ENCODE measurements at regions of chr18 and their contacts with region 1.

Region 1: DNA sequence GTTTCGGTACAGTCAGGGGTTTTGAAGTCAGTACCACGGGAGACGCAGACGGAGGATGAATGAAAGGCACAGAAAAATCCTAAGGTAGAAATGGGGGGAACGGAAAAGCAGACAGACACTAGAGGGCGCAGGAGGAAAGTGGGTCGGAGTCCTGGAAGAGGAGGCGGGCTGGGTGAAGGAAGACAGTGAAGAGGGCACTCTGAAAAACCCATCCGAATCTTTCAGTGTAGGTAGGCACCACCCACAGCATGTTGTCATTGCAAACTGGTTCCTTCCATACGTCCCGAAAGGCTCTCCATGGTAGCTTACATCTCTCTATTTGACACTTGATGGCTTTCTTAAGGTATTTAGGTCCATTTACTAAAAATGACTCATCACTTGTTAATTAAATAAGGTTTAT is 18.5 kb upstream of the ZNF236 start:
- DNase-seq: peak; percentile 59 to 71
- H3K4me3 ChIP-seq: no peak overlapping the region
- H3K4me3 Mint-ChIP-seq: no peak overlapping the region
- H3K27ac Mint-ChIP-seq: no peak overlapping the region
- H3K4me1 ChIP-seq: no peaks in the 10 kb centered on the region
- H3K4me1 Mint-ChIP-seq: peaks cover 5% of the 10 kb centered on the region
- H3K27me3 ChIP-seq: no peaks in the 10 kb centered on the region
- H3K27me3 Mint-ChIP-seq: no peaks in the 10 kb centered on the region
- CTCF ChIP-seq: peak; percentile 33 to 75

Region 2: GRCh38 chr18:76791642-76792041 is 12.2 kb before region 1 on chr18:
- CTCF ChIA-PET with region 1: interaction called, 10 read pairs
- POLR2A ChIA-PET with region 1: no interaction called
- intact Hi-C with region 1: no loop called
- DNase-seq: no peak
- H3K4me3 ChIP-seq: no peak overlapping the region
- H3K4me3 Mint-ChIP-seq: no peak overlapping the region
- H3K27ac Mint-ChIP-seq: no peak overlapping the region
- H3K4me1 ChIP-seq: no peaks in the 10 kb centered on the region
- H3K4me1 Mint-ChIP-seq: no peaks in the 10 kb centered on the region
- H3K27me3 ChIP-seq: no peaks in the 10 kb centered on the region
- H3K27me3 Mint-ChIP-seq: no peaks in the 10 kb centered on the region
- CTCF ChIP-seq: no peak

Region 3: DNA sequence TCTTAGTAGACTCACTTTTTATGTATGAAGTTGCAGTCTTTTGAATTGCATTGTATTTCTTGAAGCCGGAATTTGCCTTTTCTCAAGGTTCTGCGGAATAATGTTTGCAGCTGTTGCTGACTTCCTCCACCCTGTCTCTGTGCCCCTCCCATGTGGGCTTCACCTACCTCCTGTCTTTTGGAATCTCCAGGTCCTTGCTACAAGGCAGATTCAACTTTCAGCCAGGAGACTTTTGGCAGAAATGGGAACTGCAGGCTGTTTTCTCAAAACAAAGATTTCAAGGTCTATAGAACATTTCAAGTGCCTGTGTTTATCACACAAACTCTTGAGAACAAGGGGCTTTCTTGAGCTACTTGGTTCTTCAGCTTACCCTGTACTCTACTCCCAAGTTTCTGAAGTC is 44.1 kb after region 1 on chr18:
- CTCF ChIA-PET with region 1: no interaction called
- POLR2A ChIA-PET with region 1: no interaction called
- intact Hi-C with region 1: loop called (anchors 2 kb)
- DNase-seq: peak in 1 of 2 experiments; percentile 12
- H3K4me3 ChIP-seq: no peak overlapping the region
- H3K4me3 Mint-ChIP-seq: no peak overlapping the region
- H3K27ac Mint-ChIP-seq: no peak overlapping the region
- H3K4me1 ChIP-seq: no peaks in the 10 kb centered on the region
- H3K4me1 Mint-ChIP-seq: peaks cover 14% of the 10 kb centered on the region
- H3K27me3 ChIP-seq: no peaks in the 10 kb centered on the region
- H3K27me3 Mint-ChIP-seq: no peaks in the 10 kb centered on the region
- CTCF ChIP-seq: peak in 1 of 2 experiments; percentile 13

Region 4: GRCh38 chr18:76875390-76876325 is 71.8 kb after region 1 on chr18:
- CTCF ChIA-PET with region 1: no interaction called
- POLR2A ChIA-PET with region 1: no interaction called
- intact Hi-C with region 1: loop called (anchors 2 kb)
- DNase-seq: peak in 1 of 2 experiments; percentile 44
- H3K4me3 ChIP-seq: no peak overlapping the region
- H3K4me3 Mint-ChIP-seq: no peak overlapping the region
- H3K27ac Mint-ChIP-seq: no peak overlapping the region
- H3K4me1 ChIP-seq: no peaks in the 10 kb centered on the region
- H3K4me1 Mint-ChIP-seq: no peaks in the 10 kb centered on the region
- H3K27me3 ChIP-seq: no peaks in the 10 kb centered on the region
- H3K27me3 Mint-ChIP-seq: no peaks in the 10 kb centered on the region
- CTCF ChIP-seq: peak; percentile 30 to 38

Region 5: GRCh38 chr18:76922107-76922506 is 118.3 kb after region 1 on chr18:
- CTCF ChIA-PET with region 1: interaction called, 3 read pairs
- POLR2A ChIA-PET with region 1: no interaction called
- intact Hi-C with region 1: loop called (anchors 2 kb)
- DNase-seq: peak in 1 of 2 experiments; percentile 23
- H3K4me3 ChIP-seq: no peak overlapping the region
- H3K4me3 Mint-ChIP-seq: no peak overlapping the region
- H3K27ac Mint-ChIP-seq: no peak overlapping the region
- H3K4me1 ChIP-seq: no peaks in the 10 kb centered on the region
- H3K4me1 Mint-ChIP-seq: no peaks in the 10 kb centered on the region
- H3K27me3 ChIP-seq: no peaks in the 10 kb centered on the region
- H3K27me3 Mint-ChIP-seq: no peaks in the 10 kb centered on the region
- CTCF ChIP-seq: peak in 1 of 2 experiments; percentile 40

Region 6: DNA sequence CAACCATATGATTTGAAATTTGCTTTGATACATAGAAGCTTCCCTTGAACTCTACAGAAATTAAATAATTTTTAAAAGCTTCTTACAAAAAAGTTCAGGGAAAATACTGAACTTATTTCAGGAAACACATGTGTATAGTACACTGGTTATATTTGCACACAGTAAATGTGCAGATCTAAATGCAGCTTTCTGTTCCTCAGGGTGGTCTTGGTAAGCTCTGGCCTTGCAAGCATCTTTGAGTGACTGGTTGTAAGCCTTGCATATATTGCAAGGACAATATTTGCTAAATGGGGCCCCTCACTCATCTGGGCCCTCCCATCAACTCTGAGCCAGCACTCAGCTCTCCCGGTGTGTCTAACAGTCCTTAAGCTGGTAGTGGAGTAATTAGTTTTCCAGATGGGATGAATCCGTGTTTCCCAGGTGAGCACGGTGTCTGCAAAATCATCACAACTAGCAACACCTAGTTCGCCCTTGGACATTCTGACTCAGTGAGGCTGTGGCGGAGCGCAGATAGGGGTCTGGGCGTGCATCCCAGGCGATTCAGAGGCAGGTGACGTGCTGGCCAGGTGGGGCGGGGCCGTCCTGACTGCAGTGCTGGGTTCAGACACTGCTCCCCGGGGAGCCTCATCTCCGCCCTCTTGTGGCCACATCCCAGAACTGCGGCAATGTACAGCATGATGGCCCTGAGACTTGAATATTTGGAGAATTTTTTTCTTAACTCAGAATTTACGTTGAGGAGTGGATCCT is 179.2 kb after region 1 on chr18:
- CTCF ChIA-PET with region 1: interaction called, 4 read pairs
- POLR2A ChIA-PET with region 1: no interaction called
- intact Hi-C with region 1: loop called (anchors 1 kb)
- DNase-seq: peak; percentile 76 to 80
- H3K4me3 ChIP-seq: no peak overlapping the region
- H3K4me3 Mint-ChIP-seq: no peak overlapping the region
- H3K27ac Mint-ChIP-seq: no peak overlapping the region
- H3K4me1 ChIP-seq: no peaks in the 10 kb centered on the region
- H3K4me1 Mint-ChIP-seq: no peaks in the 10 kb centered on the region
- H3K27me3 ChIP-seq: no peaks in the 10 kb centered on the region
- H3K27me3 Mint-ChIP-seq: no peaks in the 10 kb centered on the region
- CTCF ChIP-seq: peak; percentile 57 to 70

Region 7: DNA sequence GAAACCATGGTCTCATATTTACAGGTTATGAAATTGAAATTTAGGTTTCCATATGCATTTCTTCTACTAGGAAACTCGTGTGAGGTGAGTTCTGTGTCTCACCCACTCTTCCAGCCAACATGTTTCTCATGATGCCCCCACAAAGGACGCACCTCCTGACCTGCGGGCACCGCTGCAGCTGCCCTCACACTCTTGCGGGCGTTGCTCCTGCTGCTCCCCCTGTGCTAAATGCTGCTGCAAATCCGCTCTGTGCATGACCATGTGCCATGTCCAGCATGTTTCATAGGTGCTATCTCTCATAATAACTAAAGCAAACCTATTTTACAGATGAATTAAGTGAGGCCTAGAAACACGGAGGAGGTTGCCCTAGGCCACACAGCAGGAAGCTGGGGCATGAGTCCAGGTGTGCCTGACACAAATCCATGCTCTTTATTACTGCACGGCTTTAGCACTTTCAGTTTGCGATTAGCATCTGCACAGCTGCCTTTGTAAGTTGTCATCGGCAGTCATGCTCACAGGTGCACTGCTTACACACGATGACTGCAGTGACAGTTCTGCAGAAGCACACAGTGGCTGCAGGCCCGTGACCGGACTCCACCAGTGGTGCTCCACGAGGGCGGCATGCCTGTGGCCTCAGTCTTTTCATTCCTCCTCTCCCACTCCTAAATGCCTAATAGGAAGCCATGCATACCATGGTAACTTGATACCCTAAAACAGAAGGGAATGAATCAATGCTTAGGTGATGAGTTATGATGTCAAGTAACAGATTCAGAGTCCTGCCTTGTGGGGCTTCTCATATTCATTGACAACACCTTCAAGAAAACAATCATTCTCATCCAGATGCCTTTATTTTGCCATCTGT is 430.9 kb after region 1 on chr18:
- CTCF ChIA-PET with region 1: no interaction called
- POLR2A ChIA-PET with region 1: no interaction called
- intact Hi-C with region 1: no loop called
- DNase-seq: no peak
- H3K4me3 ChIP-seq: no peak overlapping the region
- H3K4me3 Mint-ChIP-seq: no peak overlapping the region
- H3K27ac Mint-ChIP-seq: no peak overlapping the region
- H3K4me1 ChIP-seq: no peaks in the 10 kb centered on the region
- H3K4me1 Mint-ChIP-seq: no peaks in the 10 kb centered on the region
- H3K27me3 ChIP-seq: no peaks in the 10 kb centered on the region
- H3K27me3 Mint-ChIP-seq: no peaks in the 10 kb centered on the region
- CTCF ChIP-seq: no peak